A673 (cell line): ENCODE measurements at regions of chr20 and their contacts with region 1.

Region 1: GRCh38 chr20:21102603-21103311 is 3.4 kb downstream of the LINC00237 start:
- DNase-seq: peak; percentile 70
- H3K4me3 ChIP-seq: peak overlapping the region; percentile 26
- H3K27ac ChIP-seq: no peak overlapping the region
- H3K4me1 ChIP-seq: peaks cover 40% of the 10 kb centered on the region
- H3K27me3 ChIP-seq: peaks cover 100% of the 10 kb centered on the region
- CTCF ChIP-seq: no peak

Region 2: GRCh38 chr20:20780127-20780824 is 322.5 kb before region 1 on chr20:
- CTCF ChIA-PET with region 1: no interaction called
- POLR2A ChIA-PET with region 1: interaction called, 11 read pairs
- intact Hi-C with region 1: no loop called
- DNase-seq: peak; percentile 88
- H3K4me3 ChIP-seq: no peak overlapping the region
- H3K27ac ChIP-seq: no peak overlapping the region
- H3K4me1 ChIP-seq: peaks cover 25% of the 10 kb centered on the region
- H3K27me3 ChIP-seq: no peaks in the 10 kb centered on the region
- CTCF ChIP-seq: no peak